ENCODE measurements at regions of chr1 and their contacts with region 1.

Region 1: DNA sequence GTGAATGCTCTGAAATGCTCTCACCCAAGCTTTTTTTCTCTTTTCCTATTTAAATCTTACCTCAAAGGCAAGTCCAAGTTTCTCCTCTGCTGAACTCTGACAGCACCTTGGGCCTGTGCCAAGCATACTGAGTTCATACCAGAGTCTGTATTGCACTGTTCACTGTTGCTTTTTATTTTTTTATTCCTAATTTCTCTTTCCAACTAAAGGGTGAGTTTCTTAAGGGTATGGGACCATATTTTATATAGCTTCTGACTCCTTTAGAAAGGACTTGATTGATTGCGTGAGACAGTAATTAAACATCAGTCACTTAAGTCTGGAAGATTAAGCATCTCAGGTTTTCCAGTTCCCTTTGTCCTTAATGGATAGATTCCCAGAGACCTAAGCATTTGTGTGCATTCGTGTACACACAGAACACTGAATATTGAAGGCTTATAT is 69.9 kb downstream of the CACHD1 start:
- DNase-seq: peak; percentile 31
- H3K4me3 Mint-ChIP-seq: peak overlapping the region; percentile 47
- H3K27ac Mint-ChIP-seq: no peak overlapping the region
- H3K4me1 Mint-ChIP-seq: peaks cover 55% of the 10 kb centered on the region
- H3K27me3 Mint-ChIP-seq: no peaks in the 10 kb centered on the region

Region 2: DNA sequence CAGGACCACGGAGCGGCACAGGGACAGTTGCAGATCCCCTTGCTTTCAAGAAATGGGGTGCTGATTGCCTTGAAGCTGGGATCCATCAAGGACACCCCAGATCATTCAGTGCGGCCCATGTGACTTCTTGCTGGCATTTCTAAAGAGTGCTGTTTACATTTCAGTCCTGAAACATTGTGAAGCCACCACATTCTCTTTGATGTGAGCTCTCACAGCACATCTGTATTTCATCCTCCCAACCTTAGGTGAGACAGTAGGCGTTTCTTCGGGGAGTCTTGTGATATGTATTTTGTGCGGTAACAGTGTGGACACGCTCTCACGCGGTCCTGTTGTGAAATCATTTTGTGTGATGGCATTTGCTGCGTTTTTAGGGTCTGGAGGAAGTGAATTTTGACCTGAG is 12.6 kb before region 1 on chr1:
- CTCF ChIA-PET with region 1: no interaction called
- intact Hi-C with region 1: loop called (anchors 1 kb)
- DNase-seq: peak; percentile 42
- H3K4me3 Mint-ChIP-seq: no peak overlapping the region
- H3K27ac Mint-ChIP-seq: no peak overlapping the region
- H3K4me1 Mint-ChIP-seq: peaks cover 40% of the 10 kb centered on the region
- H3K27me3 Mint-ChIP-seq: no peaks in the 10 kb centered on the region

Measured in activated naive CD4-positive, alpha-beta T cell treated with anti-CD3 and anti-CD28 coated beads for 36 hours (primary cell).